ENCODE measurements at regions of chr10 and their contacts with region 1.

Region 1: GRCh38 chr10:24518981-24519597 is 204.6 kb downstream of the ARHGAP21 start:
- DNase-seq: peak; percentile 60
- ATAC-seq: peak; percentile 90
- H3K4me3 ChIP-seq: no peak overlapping the region
- H3K27ac ChIP-seq: no peak overlapping the region
- H3K4me1 ChIP-seq: no peaks in the 10 kb centered on the region; the same call in 1 of the 2 replicates
- H3K27me3 ChIP-seq: no peaks in the 10 kb centered on the region
- CTCF ChIP-seq: peak; percentile 84
- POLR2A ChIP-seq: no peak
- RAD21 ChIP-seq: peak; percentile 89

Region 2: DNA sequence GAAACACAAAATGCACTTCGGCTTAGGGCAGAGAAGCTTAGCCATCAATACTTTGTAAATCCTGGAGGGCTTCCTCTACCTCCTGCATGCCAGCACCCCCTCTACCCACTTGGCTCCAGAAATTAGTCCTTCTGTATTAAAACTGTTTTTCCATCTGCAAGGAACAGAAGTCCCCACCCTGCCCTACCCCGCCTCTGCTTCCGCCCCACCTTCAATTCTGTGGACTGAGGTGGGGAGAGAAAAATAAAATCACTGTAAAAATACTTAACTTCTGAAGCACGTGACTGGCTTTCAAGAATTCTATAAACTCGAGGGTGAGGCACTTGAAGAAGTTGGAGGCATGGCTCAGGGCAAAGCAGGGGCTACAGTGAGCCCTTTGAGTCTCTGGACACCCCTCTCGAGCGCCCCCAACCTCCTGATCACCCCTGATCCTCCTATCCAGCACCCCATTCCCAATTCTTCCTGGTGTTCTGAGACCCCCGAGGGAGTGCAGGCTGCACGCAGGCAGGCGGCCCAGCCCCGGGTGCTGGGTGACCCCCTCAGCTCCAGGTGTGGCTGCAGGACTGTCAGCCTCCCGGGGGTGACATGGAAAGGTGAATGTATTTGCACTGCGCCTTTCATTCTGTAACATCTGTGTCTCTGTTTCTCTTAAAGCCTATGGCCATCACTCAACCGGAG is 317.4 kb before region 1 on chr10:
- CTCF ChIA-PET with region 1: no interaction called
- POLR2A ChIA-PET with region 1: no interaction called
- dilution Hi-C with region 1: no loop called
- in situ Hi-C with region 1: loop called (anchors 10 kb)
- intact Hi-C with region 1: loop called (anchors 5 kb)
- DNase-seq: no peak
- ATAC-seq: no peak
- H3K4me3 ChIP-seq: no peak overlapping the region
- H3K27ac ChIP-seq: no peak overlapping the region
- H3K4me1 ChIP-seq: no peaks in the 10 kb centered on the region
- H3K27me3 ChIP-seq: peaks cover 2% of the 10 kb centered on the region; the same call in 1 of the 2 replicates
- CTCF ChIP-seq: no peak
- POLR2A ChIP-seq: no peak
- RAD21 ChIP-seq: no peak

Region 3: GRCh38 chr10:24556750-24557742 is 38.0 kb after region 1 on chr10:
- CTCF ChIA-PET with region 1: no interaction called
- POLR2A ChIA-PET with region 1: no interaction called
- dilution Hi-C with region 1: no loop called
- in situ Hi-C with region 1: no loop called
- intact Hi-C with region 1: no loop called
- DNase-seq: peak; percentile 79
- ATAC-seq: peak; percentile 93
- H3K4me3 ChIP-seq: no peak overlapping the region
- H3K27ac ChIP-seq: no peak overlapping the region
- H3K4me1 ChIP-seq: no peaks in the 10 kb centered on the region
- H3K27me3 ChIP-seq: peaks cover 3% of the 10 kb centered on the region; the same call in 1 of the 2 replicates
- CTCF ChIP-seq: peak; percentile 75
- POLR2A ChIP-seq: no peak
- RAD21 ChIP-seq: peak; percentile 65